ENCODE measurements at regions of chr3 and their contacts with region 1.

Region 1: GRCh38 chr3:69084326-69085167 is at the start of gene ARL6IP5:
- DNase-seq: peak; percentile 93 to 97 (median 96)
- H3K4me3 ChIP-seq: peak within 1 kb of the TSS; percentile 75 to 93 (median 91)
- H3K4me3 Mint-ChIP-seq: peak within 1 kb of the TSS; percentile 91 to 96
- H3K27ac ChIP-seq: peak within 1 kb of the TSS; percentile 80 to 94
- H3K27ac Mint-ChIP-seq: peak within 1 kb of the TSS; percentile 97 to 100 (median 99)
- H3K4me1 ChIP-seq: peaks cover 71 to 82% of the 10 kb centered on the region in 2 donors
- H3K4me1 Mint-ChIP-seq: peaks cover 63% of the 10 kb centered on the region
- H3K27me3 ChIP-seq: no peaks in the 10 kb centered on the region
- H3K27me3 Mint-ChIP-seq: no peaks in the 10 kb centered on the region
- CTCF ChIP-seq: no peak
- polyA plus RNA-seq, gene ARL6IP5: 69.3 to 458 (median 430) TPM

Region 2: DNA sequence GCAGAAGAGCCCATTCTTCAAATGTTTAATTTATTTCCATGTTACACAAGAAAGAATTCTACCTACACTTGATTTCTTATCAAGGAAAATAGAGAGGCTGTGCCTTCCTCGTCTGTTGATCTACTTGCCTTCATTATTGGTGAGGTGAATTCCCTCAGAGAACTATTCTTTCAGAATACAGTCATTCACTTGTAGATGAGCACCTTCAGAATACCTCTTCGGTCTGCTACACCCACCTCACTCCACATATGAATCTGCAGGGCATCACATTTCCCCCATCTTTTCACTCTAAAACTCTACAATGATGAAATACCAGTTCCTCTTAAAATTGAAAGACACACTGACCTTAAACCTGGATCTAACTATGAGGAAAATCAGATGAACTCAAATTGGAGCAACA is 195.2 kb before region 1 on chr3:
- intact Hi-C with region 1: no loop called
- DNase-seq: no peak
- H3K4me3 ChIP-seq: no peak overlapping the region
- H3K4me3 Mint-ChIP-seq: no peak overlapping the region
- H3K27ac ChIP-seq: no peak overlapping the region
- H3K27ac Mint-ChIP-seq: no peak overlapping the region
- H3K4me1 ChIP-seq: no peaks in the 10 kb centered on the region
- H3K4me1 Mint-ChIP-seq: no peaks in the 10 kb centered on the region
- H3K27me3 ChIP-seq: peaks cover 0 to 3% of the 10 kb centered on the region in 2 donors
- H3K27me3 Mint-ChIP-seq: peaks cover 0 to 10% (median 6%) of the 10 kb centered on the region in 3 donors
- CTCF ChIP-seq: no peak

Region 3: GRCh38 chr3:69013253-69014021 is 71.1 kb before region 1 on chr3 and contains the start of gene EOGT:
- intact Hi-C with region 1: no loop called
- DNase-seq: peak; percentile 43 to 68 (median 66)
- H3K4me3 ChIP-seq: peak within 1 kb of the TSS; percentile 65 to 87 (median 85)
- H3K4me3 Mint-ChIP-seq: peak within 1 kb of the TSS; percentile 87 to 96
- H3K27ac ChIP-seq: no peak within 1 kb of the TSS
- H3K27ac Mint-ChIP-seq: peak within 1 kb of the TSS in 5 of 7 donors; percentile 57 to 77 (median 65)
- H3K4me1 ChIP-seq: peaks cover 9 to 14% of the 10 kb centered on the region in 2 donors
- H3K4me1 Mint-ChIP-seq: peaks cover 12% of the 10 kb centered on the region
- H3K27me3 ChIP-seq: no peaks in the 10 kb centered on the region
- H3K27me3 Mint-ChIP-seq: peaks cover 2 to 4% (median 2%) of the 10 kb centered on the region in 3 donors
- CTCF ChIP-seq: peak; percentile 73
- polyA plus RNA-seq, gene EOGT: 3.7 to 8.1 (median 5.0) TPM

Region 4: GRCh38 chr3:69051756-69052471 is 32.6 kb before region 1 on chr3 and contains the start of gene TMF1:
- intact Hi-C with region 1: loop called (anchors 2 to 5 kb)
- DNase-seq: peak; percentile 98 to 100 (median 99)
- H3K4me3 ChIP-seq: peak within 1 kb of the TSS; percentile 86 to 96 (median 91)
- H3K4me3 Mint-ChIP-seq: peak within 1 kb of the TSS; percentile 95 to 97
- H3K27ac ChIP-seq: peak within 1 kb of the TSS; percentile 86 to 95
- H3K27ac Mint-ChIP-seq: peak within 1 kb of the TSS; percentile 96 to 99 (median 99)
- H3K4me1 ChIP-seq: peaks cover 15 to 31% of the 10 kb centered on the region in 2 donors
- H3K4me1 Mint-ChIP-seq: peaks cover 26% of the 10 kb centered on the region
- H3K27me3 ChIP-seq: no peaks in the 10 kb centered on the region
- H3K27me3 Mint-ChIP-seq: peaks cover 0 to 2% (median 0%) of the 10 kb centered on the region in 3 donors
- CTCF ChIP-seq: no peak
- polyA plus RNA-seq, gene TMF1: 6.4 to 25.6 (median 23.1) TPM

Region 5: GRCh38 chr3:69463531-69463930 is 379.0 kb after region 1 on chr3:
- intact Hi-C with region 1: no loop called
- DNase-seq: no peak
- H3K4me3 ChIP-seq: no peak overlapping the region
- H3K4me3 Mint-ChIP-seq: no peak overlapping the region
- H3K27ac ChIP-seq: no peak overlapping the region
- H3K27ac Mint-ChIP-seq: no peak overlapping the region
- H3K4me1 ChIP-seq: peaks cover 17 to 20% of the 10 kb centered on the region in 2 donors
- H3K4me1 Mint-ChIP-seq: peaks cover 28% of the 10 kb centered on the region
- H3K27me3 ChIP-seq: no peaks in the 10 kb centered on the region
- H3K27me3 Mint-ChIP-seq: no peaks in the 10 kb centered on the region
- CTCF ChIP-seq: no peak

Region 6: DNA sequence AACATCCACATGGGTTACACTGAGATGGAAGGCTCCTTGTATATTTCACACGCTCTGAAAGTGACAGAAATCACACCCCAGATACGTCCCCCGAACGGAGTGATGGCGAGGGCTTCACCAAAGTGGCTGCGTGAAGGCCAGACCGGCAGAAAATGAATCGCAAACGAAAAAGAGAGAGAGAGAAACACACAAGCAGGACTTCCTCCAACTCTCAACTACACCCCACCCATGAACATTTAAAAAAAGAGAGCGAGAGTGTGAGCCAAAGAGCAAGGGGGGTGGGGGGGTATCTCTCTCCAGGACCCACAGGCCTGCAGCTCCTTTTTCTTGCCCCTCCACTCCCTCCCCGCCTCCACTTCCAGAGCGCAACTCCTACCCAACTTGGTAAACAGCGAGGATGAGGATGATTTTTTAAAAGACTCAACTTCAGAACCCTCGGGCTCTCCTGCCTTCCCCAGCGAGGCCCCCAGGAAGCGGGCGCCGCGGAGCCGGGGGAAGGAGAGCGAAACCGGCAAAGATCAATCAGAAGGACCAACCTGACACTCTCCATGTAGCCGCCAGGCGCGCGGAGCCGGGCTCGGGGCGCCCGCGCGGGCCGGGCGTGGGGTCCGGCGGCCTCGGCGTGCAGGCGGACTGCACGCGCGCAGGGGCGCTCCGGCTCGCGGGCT is 1979.9 kb after region 1 on chr3:
- intact Hi-C with region 1: loop called in 1 of 2 experiments (anchors 10 kb)
- DNase-seq: peak; percentile 14 to 32 (median 26)
- H3K4me3 ChIP-seq: peak overlapping the region; percentile 70 to 90 (median 79)
- H3K4me3 Mint-ChIP-seq: no peak overlapping the region
- H3K27ac ChIP-seq: peak overlapping the region; percentile 65 to 83
- H3K27ac Mint-ChIP-seq: no peak overlapping the region
- H3K4me1 ChIP-seq: peaks cover 41 to 50% of the 10 kb centered on the region in 2 donors
- H3K4me1 Mint-ChIP-seq: peaks cover 29% of the 10 kb centered on the region
- H3K27me3 ChIP-seq: no peaks in the 10 kb centered on the region
- H3K27me3 Mint-ChIP-seq: peaks cover 0 to 6% (median 4%) of the 10 kb centered on the region in 3 donors
- CTCF ChIP-seq: no peak